Left ventricle myocardium superior (tissue), 1 donor: ENCODE measurements at regions of chr9 and their contacts with region 1.

Region 1: GRCh38 chr9:38362852-38363593 is 29.5 kb upstream of the ALDH1B1 start:
- DNase-seq: peak; percentile 46
- ATAC-seq: peak; percentile 86

Region 2: DNA sequence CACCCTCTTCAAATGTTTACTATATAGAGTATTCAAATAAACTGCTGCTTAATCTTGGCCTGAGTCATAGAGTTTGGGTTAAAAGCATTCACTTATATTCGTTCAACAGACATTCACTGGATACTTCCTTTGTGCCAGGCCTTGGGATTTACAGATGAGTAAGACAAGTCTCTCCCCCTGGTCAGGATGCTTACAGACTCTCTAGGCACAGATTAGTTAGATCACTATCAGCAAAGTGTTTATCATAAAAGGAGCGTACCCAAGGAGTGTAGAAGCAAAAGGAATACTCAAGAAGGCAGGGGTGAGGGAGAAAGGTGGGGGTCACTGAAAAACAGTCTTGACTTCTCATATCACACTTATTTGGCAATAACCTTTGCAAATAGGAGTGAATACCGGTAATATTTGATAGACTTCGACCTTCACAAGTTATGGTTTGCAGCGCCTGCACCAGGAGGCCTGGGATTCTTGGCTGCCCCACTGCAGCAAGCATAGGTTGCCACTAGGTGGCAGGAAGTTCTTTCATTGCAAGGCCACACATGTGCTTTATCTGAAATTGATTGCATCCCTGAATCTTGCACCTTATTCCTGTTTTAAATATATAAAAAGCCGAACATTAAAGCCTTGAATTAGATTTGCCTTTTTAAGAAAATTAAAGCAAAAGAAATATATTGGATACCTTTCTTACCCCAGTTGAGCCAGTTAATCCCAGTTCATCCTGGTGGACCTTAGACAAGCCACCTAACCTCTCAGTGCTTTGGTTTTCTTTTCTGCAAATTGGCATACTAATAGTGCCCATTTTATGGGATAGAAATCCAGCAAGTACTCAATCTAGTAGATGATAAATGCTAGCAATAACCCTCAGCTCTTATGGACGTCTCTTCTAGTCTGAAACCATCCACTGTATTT is 615.9 kb before region 1 on chr9:
- intact Hi-C with region 1: loop called (anchors 10 kb)
- DNase-seq: peak; percentile 47
- ATAC-seq: peak; percentile 77

Region 3: GRCh38 chr9:37994639-37995347 is 368.2 kb before region 1 on chr9:
- intact Hi-C with region 1: no loop called
- DNase-seq: peak; percentile 86
- ATAC-seq: peak; percentile 90

Region 4: DNA sequence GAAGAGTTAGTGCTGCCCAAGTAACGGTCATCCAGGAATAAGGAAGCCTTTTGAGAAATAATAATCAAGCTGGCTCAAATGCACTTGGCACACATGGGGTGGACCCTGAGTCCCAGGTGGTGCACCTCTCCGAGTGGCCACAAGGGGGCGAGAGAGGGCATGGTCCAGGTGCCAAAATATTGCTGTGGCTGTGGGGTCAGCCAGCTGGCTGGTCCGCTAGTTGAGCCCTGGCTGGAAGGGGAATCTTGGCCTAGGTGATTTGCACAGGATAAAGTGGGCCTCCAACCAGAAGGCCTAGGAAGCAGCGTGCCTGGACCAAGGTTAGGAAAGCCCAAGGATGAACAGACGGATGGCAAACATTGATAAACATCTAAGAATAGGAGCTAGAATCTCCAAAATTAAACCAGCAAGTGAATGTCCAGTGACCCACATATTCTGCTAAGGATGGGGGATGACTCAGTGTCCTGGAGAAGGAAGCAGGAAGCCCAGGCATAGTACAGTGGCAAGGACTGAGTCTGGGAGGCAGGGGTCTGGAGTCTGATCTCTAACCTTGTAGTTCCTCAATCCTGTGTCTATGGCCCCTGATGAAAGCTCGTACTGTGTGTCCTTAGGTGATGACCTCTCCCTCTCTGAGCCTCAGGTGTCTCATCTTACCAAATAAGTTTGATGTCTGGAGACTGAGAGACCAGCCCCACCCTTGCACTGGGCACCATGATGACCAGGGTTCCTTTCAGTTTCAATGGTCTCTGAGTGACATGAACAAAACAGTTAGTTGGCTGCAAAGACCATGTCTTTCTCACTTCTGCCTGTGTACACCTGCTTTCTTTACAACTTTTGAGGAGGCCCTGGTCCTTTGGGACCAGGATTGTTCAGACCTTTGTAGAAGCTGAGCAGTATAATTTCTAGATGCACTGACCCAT is 274.8 kb before region 1 on chr9:
- intact Hi-C with region 1: loop called (anchors 5 kb)
- DNase-seq: peak; percentile 82
- ATAC-seq: peak; percentile 81

Region 5: DNA sequence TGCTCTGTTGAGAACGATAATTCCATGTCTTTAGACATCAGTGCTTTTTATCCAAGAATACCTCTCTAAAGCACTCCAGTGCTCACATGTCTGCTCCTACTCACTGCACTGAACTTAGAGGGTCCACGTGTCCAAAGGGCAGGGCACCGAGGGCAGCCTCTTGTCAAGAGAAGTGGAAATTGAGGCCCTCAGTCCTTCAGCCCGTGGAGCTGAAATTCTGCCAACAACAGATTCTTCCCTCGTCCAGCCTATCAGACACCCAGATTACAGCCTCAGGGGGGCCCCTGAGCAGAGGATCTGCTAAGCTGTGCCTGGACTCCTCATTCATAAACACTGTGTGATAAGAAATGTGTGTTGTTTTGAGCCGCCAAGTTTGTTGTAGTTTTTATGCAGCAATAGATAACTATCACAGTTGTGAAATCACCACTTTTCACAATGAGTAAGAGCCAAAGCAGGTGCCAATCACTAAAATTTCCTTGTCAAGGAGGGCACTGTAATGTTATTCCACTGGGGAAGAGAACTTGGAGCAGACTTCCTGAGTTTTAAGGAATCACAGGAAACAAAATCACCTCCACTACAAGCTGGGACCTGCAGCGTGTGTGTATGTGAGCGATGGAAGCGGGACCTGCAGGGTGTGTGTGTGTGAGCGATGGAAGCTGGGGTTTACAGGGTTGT is 120.0 kb after region 1 on chr9:
- intact Hi-C with region 1: no loop called
- DNase-seq: no peak
- ATAC-seq: no peak